Activated T-helper 1 cell treated with anti-CD3 and anti-CD28 coated beads, Interleukin-12 subunit alpha, Interleukin-12 subunit beta, Interleukin-2, Interleukin-4 antibody, amounts not matched to agents 30 ng/mL and 10 ng/mL and 1 ng/mL, durations not matched to agents 14 hours and 24 hours and 36 hours (primary cell): ENCODE measurements at regions of chr11 and their contacts with region 1.

Region 1: GRCh38 chr11:11787305-11788062 is 54.3 kb upstream of the USP47 start:
- DNase-seq: peak; percentile 36
- H3K4me3 Mint-ChIP-seq: no peak overlapping the region
- H3K27ac Mint-ChIP-seq: no peak overlapping the region
- H3K4me1 Mint-ChIP-seq: no peaks in the 10 kb centered on the region
- H3K27me3 Mint-ChIP-seq: peaks cover 20% of the 10 kb centered on the region

Region 2: GRCh38 chr11:10792398-10792975 is 995.0 kb before region 1 on chr11:
- intact Hi-C with region 1: loop called (anchors 1 kb)
- DNase-seq: peak; percentile 74
- H3K4me3 Mint-ChIP-seq: peak overlapping the region; percentile 1
- H3K27ac Mint-ChIP-seq: no peak overlapping the region
- H3K4me1 Mint-ChIP-seq: peaks cover 21% of the 10 kb centered on the region
- H3K27me3 Mint-ChIP-seq: peaks cover 25% of the 10 kb centered on the region

Region 3: DNA sequence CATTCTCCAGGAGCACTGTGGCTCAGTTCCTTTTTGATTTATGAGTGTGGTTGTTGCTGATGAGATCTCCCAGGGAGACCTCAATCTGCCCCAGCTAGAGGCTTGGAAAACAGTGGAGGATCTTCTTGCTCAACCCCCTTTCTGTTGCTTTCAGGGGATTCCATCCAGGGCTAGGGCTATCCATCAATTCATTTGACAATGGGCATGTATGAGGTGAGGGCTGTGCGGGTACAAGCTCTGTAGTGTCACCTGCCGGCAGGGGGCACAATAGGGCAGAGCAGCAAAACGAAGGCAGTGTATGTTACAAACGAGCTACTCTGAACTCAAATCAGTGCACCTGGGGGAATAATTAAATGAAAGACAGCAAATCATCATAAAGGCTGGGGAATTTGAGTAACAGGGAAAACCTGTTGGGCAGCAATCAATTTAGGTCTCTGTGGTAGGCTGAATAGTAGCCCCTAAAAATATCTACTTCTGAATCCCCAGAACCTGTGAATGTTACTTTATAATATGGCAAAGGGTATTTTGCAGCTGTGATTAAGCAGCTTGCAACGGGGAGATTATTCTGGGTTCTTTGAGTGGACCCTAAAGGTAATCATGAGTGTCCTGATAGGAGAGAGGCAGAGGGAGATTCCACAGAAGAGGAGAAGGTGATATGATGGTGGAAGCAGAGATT is 759.3 kb before region 1 on chr11:
- intact Hi-C with region 1: loop called (anchors 1 kb)
- DNase-seq: peak; percentile 57
- H3K4me3 Mint-ChIP-seq: no peak overlapping the region
- H3K27ac Mint-ChIP-seq: no peak overlapping the region
- H3K4me1 Mint-ChIP-seq: no peaks in the 10 kb centered on the region
- H3K27me3 Mint-ChIP-seq: peaks cover 16% of the 10 kb centered on the region

Region 4: DNA sequence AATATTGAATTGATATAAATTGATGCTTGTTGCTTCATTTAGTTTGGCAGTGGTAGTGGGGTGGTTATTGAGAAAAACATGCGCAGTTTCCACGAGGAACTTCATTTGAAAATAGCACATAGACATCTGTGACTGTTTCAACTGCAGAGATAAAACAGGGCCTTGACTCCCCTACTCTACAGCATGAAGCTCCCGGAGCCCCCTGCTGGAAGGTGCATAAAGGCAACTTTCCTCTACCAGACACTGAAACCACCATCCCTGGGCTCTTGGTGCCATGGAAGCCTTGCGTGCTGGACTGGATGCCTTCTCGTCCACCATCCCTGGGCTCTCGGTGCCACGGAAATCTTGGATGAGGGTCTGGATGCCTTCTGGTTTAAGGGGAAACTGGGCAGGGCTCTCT is 630.3 kb before region 1 on chr11:
- intact Hi-C with region 1: loop called (anchors 5 kb)
- DNase-seq: peak; percentile 12
- H3K4me3 Mint-ChIP-seq: no peak overlapping the region
- H3K27ac Mint-ChIP-seq: no peak overlapping the region
- H3K4me1 Mint-ChIP-seq: peaks cover 23% of the 10 kb centered on the region
- H3K27me3 Mint-ChIP-seq: peaks cover 6% of the 10 kb centered on the region

Region 5: DNA sequence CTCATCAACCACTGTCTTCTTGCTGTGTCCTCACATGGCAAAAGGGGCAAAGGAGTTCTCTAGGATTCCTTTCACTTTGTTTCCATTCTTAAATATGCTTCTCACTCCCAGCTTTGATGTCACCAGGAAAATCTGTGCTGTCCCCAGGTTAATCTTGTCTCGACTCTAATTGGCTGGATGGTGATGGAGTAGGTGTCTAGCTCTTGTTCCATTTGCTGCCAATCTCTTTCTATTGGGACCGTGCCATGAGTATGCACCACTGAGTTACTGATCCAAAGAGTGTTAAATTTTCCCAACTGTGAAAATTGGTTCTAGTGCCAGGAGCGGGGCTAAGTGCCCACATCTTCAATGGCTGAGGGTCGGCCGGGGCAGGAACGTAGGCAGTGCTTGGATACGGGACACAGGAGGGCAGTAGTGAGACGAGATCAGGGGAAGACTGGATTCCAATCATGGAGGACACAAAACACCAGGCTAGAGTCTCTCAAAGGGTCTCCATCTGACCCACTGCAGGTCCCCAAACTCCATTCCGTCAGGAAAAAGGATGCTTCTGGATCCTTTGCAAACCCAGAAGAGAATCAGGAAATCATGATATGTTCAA is 386.8 kb before region 1 on chr11:
- intact Hi-C with region 1: loop called (anchors 10 kb)
- DNase-seq: no peak
- H3K4me3 Mint-ChIP-seq: no peak overlapping the region
- H3K27ac Mint-ChIP-seq: no peak overlapping the region
- H3K4me1 Mint-ChIP-seq: no peaks in the 10 kb centered on the region
- H3K27me3 Mint-ChIP-seq: no peaks in the 10 kb centered on the region

Region 6: DNA sequence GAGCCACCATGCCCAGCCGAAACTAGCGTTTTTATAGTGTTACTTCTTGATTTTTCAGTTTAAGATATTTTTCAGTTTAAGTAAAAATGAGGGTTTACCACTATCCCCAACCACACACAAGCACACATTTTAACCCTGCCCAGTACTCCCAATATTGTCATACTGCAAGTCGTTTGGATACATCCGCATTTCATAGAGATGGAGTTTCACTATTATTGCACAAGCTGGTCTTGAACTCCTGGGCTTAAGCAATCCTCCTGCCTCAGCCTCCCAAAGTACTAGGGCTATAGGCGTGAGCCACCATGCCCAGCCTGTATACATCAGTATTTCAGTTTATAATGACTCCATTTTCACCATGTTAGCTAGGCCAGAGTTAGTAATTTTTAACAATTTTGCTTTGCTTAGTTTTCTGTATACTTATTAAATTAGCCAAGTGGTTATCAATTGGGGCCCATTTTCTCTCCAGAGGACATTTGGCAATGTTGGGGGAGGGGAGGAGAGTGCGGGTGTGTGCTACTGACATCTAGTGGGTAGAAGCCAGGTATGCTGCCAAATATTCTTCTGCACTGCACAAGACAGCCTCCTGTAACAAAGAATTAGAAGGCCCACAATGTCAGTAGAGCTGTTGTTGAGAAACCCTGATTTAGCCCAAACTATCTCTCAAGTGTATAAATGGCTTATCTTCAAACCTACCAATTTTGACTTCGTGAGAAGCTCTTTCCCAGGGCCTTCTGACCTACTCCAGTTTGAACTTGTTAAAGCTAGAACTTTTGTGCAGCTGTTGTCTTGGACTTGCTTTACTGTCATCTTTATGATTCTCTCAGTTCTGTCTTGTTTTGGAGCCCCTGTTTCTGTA is 61.6 kb after region 1 on chr11:
- intact Hi-C with region 1: loop called (anchors 1 kb)
- DNase-seq: peak; percentile 47
- H3K4me3 Mint-ChIP-seq: no peak overlapping the region
- H3K27ac Mint-ChIP-seq: no peak overlapping the region
- H3K4me1 Mint-ChIP-seq: peaks cover 44% of the 10 kb centered on the region
- H3K27me3 Mint-ChIP-seq: peaks cover 2% of the 10 kb centered on the region

Region 7: GRCh38 chr11:12281571-12282478 is 494.3 kb after region 1 on chr11:
- intact Hi-C with region 1: loop called (anchors 1 kb)
- DNase-seq: peak; percentile 63
- H3K4me3 Mint-ChIP-seq: no peak overlapping the region
- H3K27ac Mint-ChIP-seq: peak overlapping the region; percentile 20
- H3K4me1 Mint-ChIP-seq: peaks cover 22% of the 10 kb centered on the region
- H3K27me3 Mint-ChIP-seq: no peaks in the 10 kb centered on the region